Right ventricle myocardium inferior (tissue), 1 donor: ENCODE measurements at regions of chr4 and their contacts with region 1.

Region 1: GRCh38 chr4:147994076-147994475 is 262.2 kb downstream of the ARHGAP10 start:
- DNase-seq: no peak
- ATAC-seq: no peak

Region 2: GRCh38 chr4:147786031-147786430 is 208.0 kb before region 1 on chr4:
- intact Hi-C with region 1: no loop called
- DNase-seq: no peak
- ATAC-seq: no peak

Region 3: GRCh38 chr4:148056869-148057268 is 62.8 kb after region 1 on chr4:
- intact Hi-C with region 1: loop called (anchors 5 kb)
- DNase-seq: no peak
- ATAC-seq: no peak